Adrenal gland (tissue), 19 donors: ENCODE measurements at regions of chr3 and their contacts with region 1.

Region 1: GRCh38 chr3:136196401-136197158 is 445 bp upstream of the MSL2 start:
- DNase-seq: peak; percentile 98 to 99 (median 98)
- H3K4me3 ChIP-seq: peak overlapping the region; percentile 25 to 81 (median 68)
- H3K27ac ChIP-seq: peak overlapping the region; percentile 98 to 100 (median 100)
- H3K4me1 ChIP-seq: peaks cover 25 to 30% of the 10 kb centered on the region in 2 donors
- H3K27me3 ChIP-seq: no peaks in the 10 kb centered on the region
- CTCF ChIP-seq: peak in 2 of 6 experiments; percentile 7 to 16
- POLR2A ChIP-seq: peak; percentile 46 to 82

Region 2: DNA sequence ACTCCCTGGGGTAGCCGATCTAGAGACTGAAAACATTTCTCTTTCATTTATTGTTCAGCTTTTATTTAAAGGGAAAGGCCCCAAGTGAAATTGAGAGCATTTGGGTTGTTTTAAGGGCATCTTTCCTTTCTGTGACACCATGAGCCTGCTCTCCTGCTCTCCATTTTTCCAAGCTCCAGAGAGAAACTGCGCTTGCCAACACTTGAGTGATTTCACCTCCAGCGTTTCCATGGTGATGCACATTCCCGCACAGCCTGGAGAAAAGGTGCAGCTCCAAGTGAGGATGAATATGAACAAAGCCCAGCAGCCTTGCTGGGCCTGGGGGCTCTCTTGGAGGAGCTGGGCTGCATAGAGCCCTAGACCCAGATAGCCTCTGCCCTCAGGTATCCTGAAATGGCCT is 390.3 kb before region 1 on chr3:
- intact Hi-C with region 1: no loop called
- DNase-seq: no peak
- H3K4me3 ChIP-seq: no peak overlapping the region
- H3K27ac ChIP-seq: no peak overlapping the region
- H3K4me1 ChIP-seq: peaks cover 0 to 3% of the 10 kb centered on the region in 2 donors
- H3K27me3 ChIP-seq: peaks cover 10% of the 10 kb centered on the region
- CTCF ChIP-seq: no peak
- POLR2A ChIP-seq: no peak

Region 3: DNA sequence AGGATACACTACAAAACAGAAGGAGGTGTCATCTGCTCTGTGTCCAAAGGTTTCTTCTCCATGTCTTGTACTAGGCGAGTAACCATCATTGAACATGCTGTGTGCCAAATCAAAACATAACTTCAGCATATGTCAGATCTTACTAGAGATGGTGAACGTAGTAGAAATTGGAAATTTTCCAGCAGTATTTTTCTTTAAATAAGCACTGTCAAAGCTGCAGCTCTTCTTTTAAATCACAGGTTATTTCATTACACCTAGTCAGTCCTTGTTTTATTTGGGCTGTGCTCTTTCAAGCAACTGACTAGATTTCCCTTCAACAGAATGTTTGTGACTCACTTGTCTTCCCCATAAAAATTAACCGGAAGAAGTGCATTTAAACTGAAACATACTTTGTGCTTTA is 46.9 kb before region 1 on chr3:
- intact Hi-C with region 1: loop called in 1 of 2 experiments (anchors 5 kb)
- DNase-seq: no peak
- H3K4me3 ChIP-seq: no peak overlapping the region
- H3K27ac ChIP-seq: no peak overlapping the region
- H3K4me1 ChIP-seq: peaks cover 4 to 33% of the 10 kb centered on the region in 2 donors
- H3K27me3 ChIP-seq: no peaks in the 10 kb centered on the region
- CTCF ChIP-seq: no peak
- POLR2A ChIP-seq: no peak

Region 4: DNA sequence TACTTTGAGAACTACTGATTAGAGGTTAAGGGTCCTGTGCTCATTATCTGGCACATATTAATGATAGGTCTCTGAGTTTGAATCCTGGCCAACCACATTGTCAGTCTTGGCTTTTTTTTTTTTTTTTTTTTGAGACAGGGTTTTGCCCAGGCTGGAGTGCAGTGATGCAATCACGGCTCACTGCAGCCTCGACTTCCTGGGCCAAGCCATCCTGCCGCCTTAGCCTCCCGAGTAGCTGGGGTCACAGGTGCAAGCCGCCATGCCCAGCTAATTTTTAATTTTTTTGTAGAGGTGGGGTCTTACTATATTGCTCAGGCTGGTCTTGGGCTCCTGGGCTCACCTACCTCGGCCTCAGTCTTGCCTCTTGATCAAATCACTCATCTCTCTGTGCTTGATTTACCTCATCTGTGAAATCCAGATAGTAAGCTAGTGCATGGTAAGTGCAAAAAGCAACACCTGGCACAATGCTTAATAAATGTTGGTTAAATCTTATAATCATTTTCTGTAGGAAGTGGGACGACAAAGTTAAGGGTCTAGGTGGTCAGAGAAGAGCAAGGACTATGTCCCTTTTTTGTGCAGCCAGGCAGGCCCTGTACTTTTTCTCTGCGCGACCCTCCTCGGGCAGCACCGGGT is 53.1 kb after region 1 on chr3:
- intact Hi-C with region 1: loop called in 1 of 2 experiments (anchors 5 kb)
- DNase-seq: no peak
- H3K4me3 ChIP-seq: peak overlapping the region in 3 of 4 donors; percentile 56 to 92 (median 75)
- H3K27ac ChIP-seq: peak overlapping the region; percentile 62 to 100 (median 90)
- H3K4me1 ChIP-seq: peaks cover 0 to 15% of the 10 kb centered on the region in 2 donors
- H3K27me3 ChIP-seq: no peaks in the 10 kb centered on the region
- CTCF ChIP-seq: no peak
- POLR2A ChIP-seq: no peak

Region 5: DNA sequence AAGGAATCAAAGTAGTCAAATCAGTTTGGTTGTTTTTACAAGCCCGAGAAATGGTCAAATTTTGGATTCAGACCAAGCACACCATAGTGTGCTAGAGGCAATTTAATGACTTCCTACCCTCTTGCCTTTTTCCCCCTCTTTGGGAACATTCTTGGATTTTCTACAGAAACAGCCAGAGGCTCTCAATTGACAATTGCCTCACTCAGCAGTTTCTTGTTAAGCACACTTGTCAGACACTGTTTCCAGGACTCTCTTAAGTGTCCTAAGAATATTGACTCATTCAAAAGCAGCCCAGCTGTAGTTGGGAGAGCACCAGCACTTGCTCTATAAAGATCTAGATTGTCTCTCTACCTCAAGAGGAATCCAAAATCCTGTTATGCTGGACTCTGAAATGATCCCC is 620.9 kb after region 1 on chr3:
- intact Hi-C with region 1: no loop called
- DNase-seq: no peak
- H3K4me3 ChIP-seq: no peak overlapping the region
- H3K27ac ChIP-seq: peak overlapping the region in 2 of 5 donors; percentile 97 to 99
- H3K4me1 ChIP-seq: peaks cover 0 to 22% of the 10 kb centered on the region in 2 donors
- H3K27me3 ChIP-seq: no peaks in the 10 kb centered on the region
- CTCF ChIP-seq: no peak
- POLR2A ChIP-seq: no peak